Activated CD4-positive, alpha-beta memory T cell treated with anti-CD3 and anti-CD28 coated beads for 36 hours (primary cell): ENCODE measurements at regions of chr1 and their contacts with region 1.

Region 1: DNA sequence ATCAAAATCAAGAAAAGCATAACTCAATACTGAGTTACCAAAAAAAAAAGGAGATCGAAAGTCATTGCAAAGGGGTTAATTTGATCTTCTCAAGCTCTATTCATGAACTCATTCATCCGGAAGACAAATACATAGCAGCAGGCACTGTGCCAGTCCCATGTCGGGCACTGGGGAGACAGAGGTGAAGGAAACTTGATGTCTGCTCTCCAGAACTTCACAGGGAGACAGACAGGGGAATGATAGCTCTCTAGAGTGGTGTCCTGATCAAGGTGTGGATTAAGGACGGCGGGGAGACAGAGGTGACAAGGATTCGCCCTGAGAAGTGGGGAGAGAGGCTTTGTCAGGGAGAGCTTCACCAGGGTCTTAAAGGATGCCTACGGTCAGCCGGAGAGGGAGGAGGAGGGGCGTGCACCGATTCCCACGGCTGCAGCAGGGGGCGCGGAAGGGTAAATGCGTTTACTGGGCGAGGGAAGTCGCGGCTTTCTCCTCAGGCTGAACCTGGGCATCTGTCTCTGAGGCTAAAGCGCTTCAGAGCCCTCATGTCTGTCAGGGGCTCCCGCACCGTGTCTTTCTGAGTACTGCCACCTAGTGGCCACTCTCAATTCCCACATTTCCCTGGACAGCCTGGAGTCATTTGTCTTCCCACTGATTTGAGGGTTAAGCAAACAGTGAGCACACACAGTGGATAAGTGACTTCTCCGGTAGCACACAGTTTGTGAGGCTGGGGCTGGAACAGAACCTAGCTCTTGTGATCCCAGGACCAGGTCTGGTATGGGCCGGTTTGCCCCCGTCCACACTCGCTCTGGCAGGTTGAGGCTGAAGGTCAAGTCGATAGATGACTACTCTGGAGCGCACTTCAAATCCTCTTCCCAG is 152.8 kb downstream of the TENT5C start:
- DNase-seq: peak; percentile 76
- H3K4me3 Mint-ChIP-seq: peak overlapping the region; percentile 58
- H3K27ac Mint-ChIP-seq: no peak overlapping the region
- H3K4me1 Mint-ChIP-seq: peaks cover 13% of the 10 kb centered on the region
- H3K27me3 Mint-ChIP-seq: peaks cover 7% of the 10 kb centered on the region

Region 2: GRCh38 chr1:117121776-117122697 is 636.6 kb before region 1 on chr1:
- CTCF ChIA-PET with region 1: no interaction called
- POLR2A ChIA-PET with region 1: no interaction called
- intact Hi-C with region 1: loop called (anchors 10 kb)
- DNase-seq: peak; percentile 91
- H3K4me3 Mint-ChIP-seq: peak overlapping the region; percentile 72
- H3K27ac Mint-ChIP-seq: no peak overlapping the region
- H3K4me1 Mint-ChIP-seq: peaks cover 8% of the 10 kb centered on the region
- H3K27me3 Mint-ChIP-seq: peaks cover 8% of the 10 kb centered on the region

Region 3: DNA sequence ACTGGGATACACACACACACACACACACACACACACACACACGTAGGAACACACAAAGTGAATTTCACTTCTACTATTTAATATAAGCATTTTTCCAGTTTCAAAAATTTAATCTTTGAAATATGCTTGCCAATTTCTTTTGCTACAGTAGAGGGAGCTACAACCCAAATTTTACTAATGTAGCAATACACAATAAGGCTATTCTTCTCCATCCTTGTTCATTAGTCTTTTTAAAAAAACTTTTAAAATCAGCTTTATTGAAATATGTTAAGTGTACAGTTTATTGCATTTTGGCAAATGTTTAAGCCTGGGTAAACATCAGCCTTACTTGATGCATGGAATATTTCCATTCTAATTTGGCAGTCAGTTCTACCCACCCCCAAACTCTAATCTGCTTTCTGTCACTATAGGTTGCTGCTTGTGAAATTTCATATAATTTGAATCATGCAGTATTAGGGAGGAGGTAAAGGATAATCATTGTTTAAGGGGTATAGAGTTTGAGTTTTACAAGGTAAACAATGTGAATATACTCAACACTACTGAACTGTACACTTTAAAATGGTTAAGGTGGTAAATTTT is 245.8 kb before region 1 on chr1:
- CTCF ChIA-PET with region 1: interaction called, 215 read pairs
- POLR2A ChIA-PET with region 1: no interaction called
- intact Hi-C with region 1: loop called (anchors 1 kb)
- DNase-seq: no peak
- H3K4me3 Mint-ChIP-seq: no peak overlapping the region
- H3K27ac Mint-ChIP-seq: no peak overlapping the region
- H3K4me1 Mint-ChIP-seq: no peaks in the 10 kb centered on the region
- H3K27me3 Mint-ChIP-seq: no peaks in the 10 kb centered on the region

Region 4: DNA sequence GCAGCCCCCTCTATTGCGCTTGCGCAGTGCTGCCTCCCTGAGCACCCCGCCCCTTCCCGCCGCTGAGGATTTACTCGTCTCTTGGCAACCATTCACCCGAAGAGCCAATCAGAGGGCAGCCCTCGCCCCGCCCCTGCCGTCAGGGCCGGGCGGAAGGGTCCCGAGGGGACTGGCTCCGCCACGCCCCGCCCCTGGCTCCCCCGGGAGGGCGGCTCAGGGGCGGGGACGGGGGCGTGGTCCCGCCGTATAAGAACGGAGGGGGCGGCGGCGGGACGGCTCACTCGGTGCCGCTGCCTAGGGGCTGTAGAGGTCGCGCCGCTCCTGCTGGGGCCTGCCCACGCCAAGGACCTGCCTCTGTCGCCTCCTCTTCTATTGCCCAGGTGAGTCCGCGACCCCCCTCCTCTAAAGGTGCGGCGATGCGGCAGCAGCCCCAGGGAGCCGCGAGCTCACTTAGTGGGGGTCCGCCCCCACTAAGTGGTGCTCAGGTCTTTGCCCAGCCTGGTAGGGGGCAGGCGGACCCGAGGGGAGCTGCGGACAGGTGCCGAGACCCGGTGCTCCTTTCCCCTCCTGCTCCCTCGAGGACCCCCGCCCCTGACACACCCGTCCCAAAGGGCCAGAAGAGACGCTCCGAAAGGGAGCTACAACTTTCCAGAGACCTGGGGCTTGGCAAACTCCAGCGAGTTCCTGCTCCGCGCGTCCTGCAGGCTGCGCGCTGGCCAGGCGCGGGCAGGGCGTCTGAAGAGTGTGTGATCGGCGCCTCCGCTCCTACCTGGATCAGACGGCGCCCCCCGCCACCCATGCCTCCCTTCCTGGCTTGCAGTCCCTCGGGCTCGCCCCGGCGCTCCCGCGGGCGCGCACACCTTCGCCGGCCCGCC is 152.7 kb before region 1 on chr1 and contains the start of gene TENT5C:
- CTCF ChIA-PET with region 1: interaction called, 17 read pairs
- POLR2A ChIA-PET with region 1: no interaction called
- intact Hi-C with region 1: no loop called
- DNase-seq: peak; percentile 99
- H3K4me3 Mint-ChIP-seq: peak within 1 kb of the TSS; percentile 91
- H3K27ac Mint-ChIP-seq: peak within 1 kb of the TSS; percentile 94
- H3K4me1 Mint-ChIP-seq: peaks cover 41% of the 10 kb centered on the region
- H3K27me3 Mint-ChIP-seq: no peaks in the 10 kb centered on the region
- total RNA-seq, gene TENT5C: 13.8 to 14.0 TPM

Region 5: GRCh38 chr1:117674521-117675397 is 83.9 kb before region 1 on chr1:
- CTCF ChIA-PET with region 1: interaction called, 28 read pairs
- POLR2A ChIA-PET with region 1: no interaction called
- intact Hi-C with region 1: loop called (anchors 5 kb)
- DNase-seq: peak; percentile 68
- H3K4me3 Mint-ChIP-seq: no peak overlapping the region
- H3K27ac Mint-ChIP-seq: no peak overlapping the region
- H3K4me1 Mint-ChIP-seq: peaks cover 16% of the 10 kb centered on the region
- H3K27me3 Mint-ChIP-seq: no peaks in the 10 kb centered on the region

Region 6: DNA sequence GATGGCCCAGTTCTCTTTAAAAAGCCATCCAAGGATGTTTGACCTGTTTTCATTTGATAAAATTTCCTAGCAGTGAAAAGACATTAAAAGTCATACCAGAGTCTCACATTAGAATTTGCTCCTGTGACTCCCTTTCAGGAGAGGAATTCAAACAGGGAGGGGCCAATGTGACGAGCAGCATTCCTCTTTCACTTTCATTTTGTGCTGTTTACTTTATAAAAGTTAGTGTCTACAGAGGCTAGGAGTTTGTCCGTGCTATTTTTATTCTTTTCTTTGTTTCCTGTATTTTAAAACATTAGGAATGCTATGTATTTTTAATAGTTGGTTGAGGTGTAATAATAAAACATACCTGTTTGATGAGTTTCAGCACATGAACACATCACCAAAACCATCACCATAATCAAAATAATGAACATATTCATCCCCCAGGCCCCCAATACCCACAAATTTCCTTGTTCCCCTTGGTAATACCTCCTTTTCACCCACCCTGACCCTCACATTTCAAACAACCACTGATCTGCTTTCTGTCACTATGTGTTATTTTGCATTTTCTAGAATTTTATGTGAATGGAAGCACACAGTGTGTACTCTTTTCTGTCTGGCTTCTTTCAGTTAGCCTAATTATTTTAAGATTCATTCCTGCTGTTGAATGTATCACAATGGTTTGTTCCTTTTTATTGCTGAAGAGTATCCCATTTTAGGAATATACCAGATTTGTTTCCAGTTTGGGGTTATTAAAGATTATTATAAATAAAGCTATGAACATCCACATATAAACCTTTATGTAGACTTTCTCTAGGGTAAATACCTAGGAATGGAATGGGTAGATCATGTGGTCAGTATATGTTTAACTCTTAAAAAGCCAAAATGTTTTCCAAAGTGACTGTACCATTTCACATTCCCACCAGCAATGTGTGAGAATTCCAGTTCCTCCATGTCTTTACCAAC is 23.4 kb before region 1 on chr1:
- CTCF ChIA-PET with region 1: interaction called, 29 read pairs
- POLR2A ChIA-PET with region 1: no interaction called
- intact Hi-C with region 1: no loop called
- DNase-seq: peak; percentile 55
- H3K4me3 Mint-ChIP-seq: peak overlapping the region; percentile 66
- H3K27ac Mint-ChIP-seq: peak overlapping the region; percentile 73
- H3K4me1 Mint-ChIP-seq: peaks cover 10% of the 10 kb centered on the region
- H3K27me3 Mint-ChIP-seq: no peaks in the 10 kb centered on the region

Region 7: DNA sequence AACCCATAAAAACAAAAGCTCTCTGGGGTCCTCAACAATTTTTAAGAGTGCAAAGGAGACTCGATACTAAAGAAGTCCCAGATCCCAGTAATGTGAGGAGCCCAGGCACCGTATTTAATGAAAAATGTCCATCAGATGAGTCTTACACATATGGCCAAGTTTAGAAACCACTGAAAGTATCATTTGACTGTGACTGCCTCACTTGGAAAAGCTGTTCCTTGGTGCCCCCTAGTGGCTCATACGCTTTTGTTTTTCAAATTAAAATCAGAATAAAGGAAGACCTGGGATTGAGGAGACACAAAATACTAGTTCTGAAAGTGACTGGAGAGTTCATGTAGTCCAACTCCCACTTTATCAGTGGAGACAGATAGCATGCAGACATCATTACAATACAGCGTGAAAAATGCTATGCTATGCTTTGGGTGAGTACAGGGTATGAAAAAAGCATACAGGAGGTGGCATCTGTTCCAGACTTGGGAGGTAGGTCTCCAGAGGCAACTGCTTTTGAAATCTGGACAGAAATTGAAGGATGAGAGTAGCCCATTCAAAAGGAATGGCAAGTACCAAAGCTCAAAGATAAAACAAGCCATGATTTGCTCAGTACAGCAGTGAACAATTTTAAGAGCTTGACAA is 136.9 kb after region 1 on chr1:
- CTCF ChIA-PET with region 1: interaction called, 17 read pairs
- POLR2A ChIA-PET with region 1: no interaction called
- intact Hi-C with region 1: loop called (anchors 2 kb)
- DNase-seq: peak; percentile 64
- H3K4me3 Mint-ChIP-seq: no peak overlapping the region
- H3K27ac Mint-ChIP-seq: no peak overlapping the region
- H3K4me1 Mint-ChIP-seq: peaks cover 4% of the 10 kb centered on the region
- H3K27me3 Mint-ChIP-seq: no peaks in the 10 kb centered on the region